Kidney (tissue), 22 donors: ENCODE measurements at regions of chr2 and their contacts with region 1.

Region 1: GRCh38 chr2:65264821-65265670 is 37.4 kb downstream of the ACTR2 start:
- DNase-seq: peak in 3 of 5 donors; percentile 36 to 95 (median 86)
- H3K4me3 ChIP-seq: no peak overlapping the region
- H3K27ac ChIP-seq: no peak overlapping the region
- H3K4me1 ChIP-seq: no peaks in the 10 kb centered on the region
- H3K27me3 ChIP-seq: no peaks in the 10 kb centered on the region
- CTCF ChIP-seq: peak; percentile 67

Region 2: DNA sequence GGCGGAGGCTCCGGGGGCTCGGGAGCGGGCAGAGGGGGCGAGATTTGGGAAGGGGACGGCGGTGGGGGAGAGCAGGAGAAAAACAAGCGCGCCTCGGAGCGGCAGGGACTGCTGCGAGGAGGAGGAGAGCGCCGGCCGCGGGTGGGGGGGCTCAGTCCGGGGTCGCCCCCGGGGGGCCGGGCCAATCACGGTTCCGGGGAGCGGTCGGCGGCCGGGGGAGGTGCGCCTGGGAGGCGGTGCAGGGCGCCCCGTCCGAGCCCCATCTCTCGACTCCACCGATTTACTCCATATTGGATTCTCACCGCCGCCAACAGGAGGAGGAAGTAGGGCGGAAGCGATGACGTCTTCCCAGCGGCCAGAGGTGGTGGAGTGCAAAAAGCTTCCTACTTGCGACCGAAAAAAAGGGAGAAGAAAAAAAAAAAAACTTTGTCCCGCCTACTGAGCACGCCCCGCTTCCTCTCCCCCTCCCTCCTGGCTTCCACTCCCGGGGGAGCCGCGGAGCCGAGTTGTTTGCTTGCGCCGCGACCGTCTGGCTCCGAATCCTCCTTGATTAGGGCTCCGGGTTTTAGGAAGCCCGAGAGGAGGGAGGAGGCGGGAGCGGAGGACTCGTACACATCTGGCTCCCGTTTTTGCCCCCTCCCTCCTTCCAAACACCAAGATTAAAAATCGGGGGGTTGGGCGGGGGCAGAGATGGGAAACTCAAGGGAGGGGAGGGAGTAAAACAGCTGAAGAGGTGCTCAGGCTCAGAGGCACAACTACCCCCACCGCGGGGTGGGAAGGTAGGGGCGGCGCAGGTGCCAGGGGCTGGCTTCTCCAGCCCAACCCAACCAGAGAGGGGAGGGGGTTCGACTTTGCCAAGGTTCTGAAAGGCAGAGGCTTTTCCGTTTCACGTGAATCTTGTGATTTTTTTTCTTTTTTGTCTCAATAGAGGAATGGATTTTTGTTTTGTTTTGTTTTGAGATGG is 167.5 kb after region 1 on chr2 and contains the start of gene SPRED2:
- intact Hi-C with region 1: loop called (anchors 10 kb)
- DNase-seq: peak; percentile 95 to 99 (median 97)
- H3K4me3 ChIP-seq: peak within 1 kb of the TSS; percentile 73 to 84 (median 82)
- H3K27ac ChIP-seq: peak within 1 kb of the TSS; percentile 94 to 96
- H3K4me1 ChIP-seq: peaks cover 0 to 8% (median 6%) of the 10 kb centered on the region in 3 donors
- H3K27me3 ChIP-seq: no peaks in the 10 kb centered on the region
- CTCF ChIP-seq: no peak
- total RNA-seq, gene SPRED2: 42.3 TPM

Region 3: DNA sequence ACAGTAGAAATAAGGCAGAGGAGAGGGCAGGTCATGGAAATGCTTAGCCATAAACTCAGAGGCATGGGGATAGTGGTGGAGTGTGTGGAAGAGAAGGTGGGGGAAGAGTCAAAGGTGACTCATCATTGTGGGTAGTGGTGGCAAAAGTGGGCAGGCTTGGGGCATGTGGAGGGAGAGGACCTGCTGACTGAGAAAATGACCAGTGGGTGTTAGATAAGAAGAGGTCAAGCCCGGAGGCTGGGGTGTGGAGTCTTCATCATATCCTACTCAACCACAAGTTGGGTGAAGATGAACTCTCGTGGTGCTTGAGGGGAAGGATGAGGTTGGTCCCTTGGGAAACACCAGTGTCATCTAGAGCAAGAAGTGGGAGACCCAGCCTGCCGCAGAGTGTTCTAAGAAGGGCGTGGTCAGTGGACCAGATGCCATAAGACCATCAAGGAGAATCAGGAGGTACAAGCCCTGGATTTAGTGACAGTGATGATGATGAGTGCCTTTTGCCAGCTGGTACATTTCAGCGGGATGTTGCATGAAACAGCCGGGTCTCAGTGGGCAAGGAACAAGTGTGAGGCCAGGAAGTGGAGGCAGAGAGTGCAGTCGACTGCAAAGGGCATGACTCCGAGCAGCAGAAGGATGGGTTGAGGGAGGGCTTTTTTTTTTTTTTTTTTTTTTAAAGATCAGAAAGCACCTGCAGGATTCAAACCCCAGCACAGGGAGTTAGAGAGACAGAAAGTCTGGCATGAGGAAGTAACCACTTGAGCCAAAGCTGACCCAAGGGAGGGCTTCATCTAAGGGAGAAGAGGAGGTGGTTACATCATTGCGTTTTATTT is 289.9 kb after region 1 on chr2:
- intact Hi-C with region 1: loop called (anchors 5 kb)
- DNase-seq: no peak
- H3K4me3 ChIP-seq: no peak overlapping the region
- H3K27ac ChIP-seq: no peak overlapping the region
- H3K4me1 ChIP-seq: no peaks in the 10 kb centered on the region
- H3K27me3 ChIP-seq: no peaks in the 10 kb centered on the region
- CTCF ChIP-seq: no peak